Natural killer cell (primary cell): ENCODE measurements at regions of chr20 and their contacts with region 1.

Region 1: GRCh38 chr20:19114410-19114809 is 98.0 kb upstream of the SLC24A3 start:
- DNase-seq: peak in 1 of 2 donors; percentile 23
- ATAC-seq: peak; percentile 76 to 96 (median 95)
- H3K4me3 ChIP-seq: no peak overlapping the region
- H3K4me3 Mint-ChIP-seq: peak overlapping the region; percentile 58
- H3K27ac ChIP-seq: peak overlapping the region; percentile 17
- H3K27ac Mint-ChIP-seq: peak overlapping the region; percentile 80 to 85
- H3K4me1 ChIP-seq: no peaks in the 10 kb centered on the region
- H3K4me1 Mint-ChIP-seq: peaks cover 28 to 41% of the 10 kb centered on the region in 2 donors
- H3K27me3 ChIP-seq: no peaks in the 10 kb centered on the region
- H3K27me3 Mint-ChIP-seq: no peaks in the 10 kb centered on the region
- CTCF ChIP-seq: no peak

Region 2: DNA sequence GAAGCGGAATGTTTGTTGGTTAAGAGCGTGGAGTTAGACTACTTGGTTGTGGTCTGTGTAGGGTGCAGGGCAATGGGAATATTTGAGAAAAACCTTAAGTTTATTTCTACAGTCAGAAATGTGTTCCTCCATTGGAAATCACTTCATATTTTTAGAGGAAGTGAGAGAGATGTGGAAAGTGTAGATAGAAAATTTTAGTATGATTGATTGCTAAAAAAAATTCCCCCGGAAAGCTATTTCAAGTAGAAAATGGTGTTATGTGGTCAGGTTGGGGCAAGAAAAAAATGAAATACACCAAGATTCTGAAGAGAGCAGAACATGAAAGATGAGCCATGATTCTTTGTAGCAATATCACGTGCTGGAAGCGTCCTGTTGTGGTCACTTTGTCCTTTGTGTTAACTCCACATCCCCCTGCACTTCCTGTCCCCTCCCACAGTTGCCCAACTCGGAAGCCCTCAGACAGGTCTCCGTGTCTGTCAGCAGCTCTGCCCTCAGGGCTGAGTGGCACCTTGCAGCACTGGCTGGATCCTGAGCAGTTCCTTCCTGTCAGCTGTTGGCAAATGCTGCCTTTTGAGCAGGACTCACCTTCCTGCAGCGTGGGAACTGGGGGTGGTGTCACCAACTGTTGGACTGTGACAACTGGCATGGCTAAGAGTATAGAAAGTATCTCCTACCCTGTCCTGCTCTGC is 39.4 kb before region 1 on chr20:
- intact Hi-C with region 1: loop called (anchors 2 kb)
- DNase-seq: peak; percentile 25 to 47
- ATAC-seq: peak; percentile 90 to 97 (median 94)
- H3K4me3 ChIP-seq: no peak overlapping the region
- H3K4me3 Mint-ChIP-seq: peak overlapping the region; percentile 72
- H3K27ac ChIP-seq: no peak overlapping the region
- H3K27ac Mint-ChIP-seq: peak overlapping the region; percentile 58 to 68
- H3K4me1 ChIP-seq: peaks cover 15% of the 10 kb centered on the region
- H3K4me1 Mint-ChIP-seq: peaks cover 30 to 50% of the 10 kb centered on the region in 2 donors
- H3K27me3 ChIP-seq: no peaks in the 10 kb centered on the region
- H3K27me3 Mint-ChIP-seq: peaks cover 0 to 2% of the 10 kb centered on the region in 2 donors
- CTCF ChIP-seq: no peak